Common myeloid progenitor, CD34-positive (primary cell): ENCODE measurements at regions of chr7 and their contacts with region 1.

Region 1: GRCh38 chr7:142908921-142909890 is 23.7 kb upstream of the TRPV6 start:
- DNase-seq: peak; percentile 21 to 52 (median 51)
- H3K4me3 ChIP-seq: no peak overlapping the region
- H3K27ac ChIP-seq: no peak overlapping the region
- H3K4me1 ChIP-seq: peaks cover 0 to 2% (median under 1%) of the 10 kb centered on the region in 4 experiments
- H3K27me3 ChIP-seq: peaks cover 0 to 2% (median 0%) of the 10 kb centered on the region in 5 experiments

Region 2: GRCh38 chr7:142811154-142811737 is 98.0 kb before region 1 on chr7:
- CTCF ChIA-PET with region 1: no interaction called
- POLR2A ChIA-PET with region 1: no interaction called
- DNase-seq: peak; percentile 59 to 69 (median 68)
- H3K4me3 ChIP-seq: no peak overlapping the region
- H3K27ac ChIP-seq: no peak overlapping the region
- H3K4me1 ChIP-seq: peaks cover 41 to 45% (median 42%) of the 10 kb centered on the region in 4 experiments
- H3K27me3 ChIP-seq: no peaks in the 10 kb centered on the region

Region 3: GRCh38 chr7:142833174-142834048 is 75.8 kb before region 1 on chr7:
- CTCF ChIA-PET with region 1: no interaction called
- POLR2A ChIA-PET with region 1: no interaction called
- DNase-seq: peak in 1 of 3 donors; percentile 50
- H3K4me3 ChIP-seq: no peak overlapping the region
- H3K27ac ChIP-seq: no peak overlapping the region
- H3K4me1 ChIP-seq: peaks cover 0 to 11% (median 0%) of the 10 kb centered on the region in 4 experiments
- H3K27me3 ChIP-seq: no peaks in the 10 kb centered on the region

Region 4: DNA sequence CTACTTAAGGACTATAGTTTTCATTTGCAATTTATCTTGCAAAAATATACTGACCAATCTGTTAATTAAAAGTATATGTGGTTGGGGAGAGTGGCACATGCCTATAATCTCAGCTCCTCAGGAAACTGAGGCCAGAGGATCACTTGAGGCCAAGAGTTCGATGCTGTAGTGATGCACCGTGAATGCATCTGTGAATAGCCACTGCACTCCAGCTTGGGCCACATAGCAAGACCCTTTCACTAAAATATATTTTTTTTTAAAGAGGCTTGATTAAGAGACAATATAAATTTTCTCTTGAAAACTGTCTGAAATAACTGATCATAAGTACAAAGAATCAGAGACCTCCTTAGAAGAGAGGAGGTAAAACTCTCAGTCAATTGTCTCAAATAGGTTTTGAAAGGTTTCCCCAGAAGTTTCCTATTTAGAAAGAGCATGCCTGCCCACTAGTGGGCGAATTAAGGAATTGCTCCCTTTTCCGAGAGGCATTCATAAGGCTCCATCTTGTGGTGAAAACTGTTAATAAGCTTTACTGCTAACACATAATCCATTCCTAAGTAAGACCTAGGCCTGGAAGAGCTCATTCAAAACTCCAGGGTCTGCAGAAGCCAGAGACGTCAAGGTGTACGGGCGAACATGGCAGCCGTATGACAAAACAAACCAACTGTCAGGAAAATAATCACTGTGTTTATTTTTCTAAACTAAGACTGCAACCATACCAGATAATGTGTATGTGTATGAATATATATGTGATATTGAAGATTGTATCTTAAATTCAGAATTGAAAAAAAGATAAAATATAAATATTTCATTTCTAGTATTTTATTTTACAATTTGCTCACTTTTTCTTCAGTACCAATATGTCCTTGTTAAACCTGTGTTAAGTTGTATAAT is 305.8 kb after region 1 on chr7:
- CTCF ChIA-PET with region 1: interaction called, 12 read pairs
- POLR2A ChIA-PET with region 1: no interaction called
- DNase-seq: peak; percentile 85 to 93 (median 87)
- H3K4me3 ChIP-seq: no peak overlapping the region
- H3K27ac ChIP-seq: no peak overlapping the region
- H3K4me1 ChIP-seq: no peaks in the 10 kb centered on the region
- H3K27me3 ChIP-seq: peaks cover 0 to under 1% (median 0%) of the 10 kb centered on the region in 5 experiments